ENCODE measurements at regions of chr10 and their contacts with region 1.

Region 1: DNA sequence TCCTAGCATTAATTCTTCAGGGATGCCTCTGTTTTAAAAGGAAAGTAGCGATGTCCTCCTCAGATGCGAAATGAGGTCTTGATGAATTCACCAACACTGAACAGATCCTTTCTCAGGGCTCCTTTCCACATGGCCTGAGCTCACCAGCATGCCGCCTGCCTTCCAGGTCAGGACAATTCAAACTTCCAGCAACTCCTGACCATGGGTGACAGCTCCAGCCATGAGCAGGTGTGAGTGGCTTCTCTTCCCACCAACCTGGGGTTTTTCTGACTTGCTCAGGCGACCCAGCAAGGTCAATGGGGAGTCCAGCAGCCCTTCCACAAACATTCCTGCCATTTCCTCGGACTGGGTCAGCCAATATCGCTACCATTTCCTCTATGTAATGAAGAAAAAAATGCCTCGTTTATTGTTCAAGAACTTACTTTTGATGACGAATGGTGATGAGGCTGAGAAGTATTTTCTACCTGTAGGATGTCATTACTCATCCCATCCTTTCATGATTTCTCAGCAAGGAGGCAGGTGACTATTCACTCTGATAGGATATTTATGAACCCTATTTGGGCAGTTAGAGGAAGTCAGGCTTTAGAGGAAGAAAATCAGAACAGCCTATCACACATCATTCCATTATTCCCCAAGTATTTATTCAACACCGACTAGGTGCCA is 178.5 kb downstream of the FANK1 start:
- DNase-seq: peak; percentile 86
- H3K4me3 ChIP-seq: no peak overlapping the region
- H3K27ac ChIP-seq: peak overlapping the region; percentile 34
- H3K4me1 ChIP-seq: peaks cover 24% of the 10 kb centered on the region
- H3K27me3 ChIP-seq: no peaks in the 10 kb centered on the region
- CTCF ChIP-seq: no peak

Region 2: DNA sequence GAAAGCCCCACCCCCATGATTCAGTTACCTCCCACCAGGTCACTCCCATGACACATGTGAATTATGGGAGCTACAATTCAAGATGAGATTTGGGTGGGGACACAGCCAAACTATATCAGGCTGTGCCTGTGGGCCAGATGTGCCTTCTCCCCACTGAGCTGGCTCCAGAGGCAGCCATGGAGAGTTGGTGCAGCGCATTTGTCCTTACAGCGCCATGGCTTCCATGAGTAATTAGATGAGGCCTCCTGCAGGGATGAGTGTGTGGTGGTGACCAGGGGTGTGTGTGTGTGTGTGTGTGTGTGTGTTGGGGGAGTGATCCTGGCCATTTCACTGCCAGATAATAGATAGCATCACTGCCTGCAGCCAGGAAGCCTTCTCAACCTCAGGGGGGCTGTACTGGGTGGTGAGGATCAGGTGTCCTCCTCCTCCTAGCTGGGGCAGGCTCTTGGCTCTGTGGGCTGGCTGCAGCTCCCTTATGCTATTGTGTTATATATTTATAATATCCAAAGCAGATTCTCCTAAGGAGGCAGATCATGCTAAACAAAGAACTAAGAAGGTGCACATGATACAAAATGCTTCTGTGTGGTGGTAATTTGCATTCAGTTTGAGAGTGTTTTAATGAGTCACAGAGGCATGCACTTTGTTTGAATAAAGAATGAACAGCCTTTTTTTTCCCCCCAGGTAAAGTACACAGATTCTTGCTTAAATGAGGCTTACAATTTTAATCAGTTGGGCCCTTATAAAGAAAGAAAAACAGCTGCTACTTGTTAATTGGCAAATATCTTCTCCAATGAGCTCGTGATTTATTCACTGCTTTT is 83.7 kb before region 1 on chr10:
- CTCF ChIA-PET with region 1: no interaction called
- dilution Hi-C with region 1: no loop called
- in situ Hi-C with region 1: no loop called
- intact Hi-C with region 1: no loop called
- DNase-seq: no peak
- H3K4me3 ChIP-seq: no peak overlapping the region
- H3K27ac ChIP-seq: no peak overlapping the region
- H3K4me1 ChIP-seq: no peaks in the 10 kb centered on the region
- H3K27me3 ChIP-seq: no peaks in the 10 kb centered on the region
- CTCF ChIP-seq: no peak

Region 3: DNA sequence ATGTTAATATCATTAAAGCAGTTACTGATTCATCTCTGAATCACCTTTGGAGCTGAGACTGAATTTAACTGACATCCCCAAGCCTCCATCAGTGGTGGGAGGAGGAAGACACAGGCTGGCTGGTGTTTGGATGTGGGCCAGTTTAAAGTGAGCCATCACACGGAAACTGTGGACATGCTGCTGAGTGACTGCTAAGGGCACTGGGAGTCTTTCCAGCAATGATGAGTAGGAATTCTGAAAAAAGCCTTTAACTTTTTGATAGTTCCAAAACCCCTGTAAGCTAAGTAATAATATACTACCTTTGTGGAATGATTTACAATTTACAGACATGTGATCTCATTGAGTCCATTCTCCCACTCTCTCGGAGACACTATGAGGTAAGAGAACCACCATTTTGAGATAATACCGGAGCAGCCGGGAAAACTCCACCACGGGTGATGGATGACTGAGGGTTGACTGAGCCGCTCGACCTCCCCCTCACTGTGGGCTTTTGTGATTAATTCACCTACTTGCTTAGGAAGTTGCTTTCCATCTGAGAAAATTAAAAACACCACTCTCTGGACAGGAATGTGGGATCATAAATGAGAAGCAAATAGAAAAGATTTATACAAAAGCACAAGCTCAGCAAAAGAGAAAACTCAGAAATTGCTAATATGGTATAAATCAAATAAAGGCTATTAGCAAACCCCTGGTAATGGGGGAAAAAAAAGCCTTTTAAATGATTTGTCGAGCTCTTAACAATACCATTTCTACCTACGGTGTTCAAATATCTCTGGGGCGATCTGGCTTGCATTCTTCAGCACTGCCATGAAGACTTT is 16.2 kb after region 1 on chr10:
- CTCF ChIA-PET with region 1: no interaction called
- dilution Hi-C with region 1: no loop called
- in situ Hi-C with region 1: no loop called
- intact Hi-C with region 1: loop called (anchors 1 kb)
- DNase-seq: peak; percentile 93
- H3K4me3 ChIP-seq: no peak overlapping the region
- H3K27ac ChIP-seq: peak overlapping the region; percentile 28
- H3K4me1 ChIP-seq: peaks cover 23% of the 10 kb centered on the region
- H3K27me3 ChIP-seq: no peaks in the 10 kb centered on the region
- CTCF ChIP-seq: no peak

Region 4: DNA sequence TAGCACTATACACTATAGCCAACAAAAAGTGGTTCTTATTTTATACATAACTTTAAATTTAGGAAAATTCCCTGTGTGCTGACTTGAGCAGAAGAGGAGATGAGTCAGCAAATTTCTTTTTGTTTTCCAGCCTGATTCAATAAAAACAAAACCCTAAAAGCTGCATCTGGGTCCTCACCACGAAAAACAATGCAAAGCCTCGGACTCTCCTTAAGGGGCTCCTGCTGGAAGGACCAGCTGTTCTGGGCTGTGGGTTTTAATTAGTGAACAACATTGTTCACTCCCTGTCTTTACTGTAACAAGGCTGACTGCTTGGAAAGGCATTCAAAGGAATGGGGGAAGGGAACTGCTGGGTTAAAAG is 73.3 kb after region 1 on chr10:
- CTCF ChIA-PET with region 1: no interaction called
- dilution Hi-C with region 1: no loop called
- in situ Hi-C with region 1: no loop called
- intact Hi-C with region 1: no loop called
- DNase-seq: peak; percentile 2
- H3K4me3 ChIP-seq: no peak overlapping the region
- H3K27ac ChIP-seq: no peak overlapping the region
- H3K4me1 ChIP-seq: no peaks in the 10 kb centered on the region
- H3K27me3 ChIP-seq: no peaks in the 10 kb centered on the region
- CTCF ChIP-seq: no peak

Measured in mammary epithelial cell (primary cell).